ENCODE measurements at regions of chr5 and their contacts with region 1.

Region 1: GRCh38 chr5:173573126-173573960 is 43.1 kb downstream of the BOD1 start:
- DNase-seq: peak; percentile 87
- ATAC-seq: peak; percentile 85
- H3K4me3 Mint-ChIP-seq: peak overlapping the region; percentile 43
- H3K27ac Mint-ChIP-seq: no peak overlapping the region
- H3K4me1 Mint-ChIP-seq: peaks cover 32% of the 10 kb centered on the region
- H3K27me3 Mint-ChIP-seq: peaks cover 2% of the 10 kb centered on the region; the same call in 1 of the 2 replicates
- CTCF ChIP-seq: peak; percentile 98

Region 2: DNA sequence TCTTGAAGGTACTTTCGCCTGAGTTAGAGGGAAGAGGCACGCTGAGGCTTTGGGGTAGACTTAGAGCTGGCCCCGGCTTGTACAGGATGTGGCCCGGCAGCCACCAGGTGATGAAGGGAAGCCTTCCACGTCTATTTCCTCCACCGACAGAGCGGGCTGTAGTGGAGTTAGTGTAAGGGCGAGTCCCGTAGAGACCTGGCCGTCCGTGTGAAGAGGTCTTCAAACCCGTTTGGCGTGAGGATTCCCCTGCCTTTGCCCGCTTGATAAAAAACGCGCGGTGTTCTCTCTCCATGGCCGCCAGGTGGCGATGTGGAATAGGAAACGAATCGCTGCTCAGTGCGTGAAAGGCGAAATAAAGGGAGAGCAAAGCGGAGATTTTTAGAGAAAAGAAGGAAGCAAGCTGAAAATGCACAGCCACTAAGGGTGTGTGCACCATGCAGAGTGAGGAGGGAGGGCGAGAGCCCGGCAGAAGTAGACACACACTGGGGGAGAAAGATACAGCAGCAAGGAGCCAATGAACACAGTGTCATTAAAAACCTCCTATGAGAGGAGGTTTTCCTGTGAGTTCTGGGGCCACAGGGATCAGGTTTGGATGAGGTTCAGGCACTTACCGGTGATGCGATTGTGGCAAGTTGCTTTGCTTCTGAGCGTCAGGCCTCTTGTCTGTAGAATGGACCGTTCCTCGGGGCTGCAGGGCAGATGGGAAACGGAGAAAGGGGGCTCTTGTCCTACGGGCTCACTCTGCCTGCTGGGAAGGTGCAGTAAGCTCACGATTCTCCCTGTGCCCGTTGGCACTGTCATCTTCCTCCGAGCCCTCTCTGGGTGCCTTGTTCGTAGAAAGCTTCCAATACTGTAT is 279.3 kb before region 1 on chr5:
- CTCF ChIA-PET with region 1: interaction called, 16 read pairs
- POLR2A ChIA-PET with region 1: no interaction called
- DNase-seq: peak; percentile 85
- ATAC-seq: peak; percentile 67
- H3K4me3 Mint-ChIP-seq: peak overlapping the region; percentile 63
- H3K27ac Mint-ChIP-seq: no peak overlapping the region
- H3K4me1 Mint-ChIP-seq: peaks cover 56% of the 10 kb centered on the region
- H3K27me3 Mint-ChIP-seq: peaks cover 36% of the 10 kb centered on the region
- CTCF ChIP-seq: peak; percentile 94

Region 3: GRCh38 chr5:173315495-173316350 is 257.6 kb before region 1 on chr5:
- CTCF ChIA-PET with region 1: interaction called, 4 read pairs
- POLR2A ChIA-PET with region 1: interaction called, 10 read pairs
- DNase-seq: no peak
- ATAC-seq: peak; percentile 50
- H3K4me3 Mint-ChIP-seq: no peak overlapping the region
- H3K27ac Mint-ChIP-seq: peak overlapping the region; percentile 91
- H3K4me1 Mint-ChIP-seq: peaks cover 42% of the 10 kb centered on the region
- H3K27me3 Mint-ChIP-seq: peaks cover 16% of the 10 kb centered on the region
- CTCF ChIP-seq: no peak

Region 4: DNA sequence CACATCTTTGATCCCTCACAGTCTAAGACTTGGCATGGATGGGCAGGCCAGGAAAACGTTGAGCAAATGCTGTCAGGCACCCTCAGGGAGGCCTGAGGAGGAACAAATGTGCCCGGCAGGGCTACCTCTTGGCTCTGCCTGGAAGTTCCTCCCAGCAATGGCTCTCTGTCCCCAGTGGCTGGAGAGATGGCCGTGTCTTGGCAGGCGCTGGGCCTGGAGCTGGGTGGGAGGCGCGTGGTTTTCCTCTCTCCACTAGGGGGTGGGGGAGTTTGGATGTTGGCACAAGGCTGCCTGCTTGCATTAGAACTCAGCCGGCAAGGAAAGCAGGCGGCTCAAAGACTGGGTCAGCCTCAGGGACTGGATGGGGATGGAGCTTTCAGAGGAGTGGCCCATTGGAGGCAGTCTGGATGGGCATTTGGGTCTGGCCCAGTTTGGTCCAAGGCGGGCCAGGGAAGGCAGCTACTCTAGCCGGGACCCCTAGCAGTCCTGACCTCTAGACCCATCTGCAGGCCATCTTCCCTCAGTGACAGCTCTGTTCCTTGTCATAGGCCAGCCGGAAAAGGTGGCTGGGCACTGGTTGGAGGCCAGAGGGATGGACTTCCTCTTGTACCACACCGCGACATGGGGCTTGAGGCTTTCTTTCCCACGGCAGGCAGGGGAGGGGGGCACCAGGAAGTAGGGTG is 176.9 kb before region 1 on chr5:
- CTCF ChIA-PET with region 1: interaction called, 50 read pairs
- POLR2A ChIA-PET with region 1: no interaction called
- DNase-seq: peak; percentile 73
- ATAC-seq: peak; percentile 96
- H3K4me3 Mint-ChIP-seq: no peak overlapping the region
- H3K27ac Mint-ChIP-seq: no peak overlapping the region
- H3K4me1 Mint-ChIP-seq: 0 out of 2 replicates have a peak, but pooled peaks cover 3% of the 10 kb centered on the region
- H3K27me3 Mint-ChIP-seq: peaks cover 5% of the 10 kb centered on the region
- CTCF ChIP-seq: no peak; the same call in 1 of the 2 replicates

Region 5: DNA sequence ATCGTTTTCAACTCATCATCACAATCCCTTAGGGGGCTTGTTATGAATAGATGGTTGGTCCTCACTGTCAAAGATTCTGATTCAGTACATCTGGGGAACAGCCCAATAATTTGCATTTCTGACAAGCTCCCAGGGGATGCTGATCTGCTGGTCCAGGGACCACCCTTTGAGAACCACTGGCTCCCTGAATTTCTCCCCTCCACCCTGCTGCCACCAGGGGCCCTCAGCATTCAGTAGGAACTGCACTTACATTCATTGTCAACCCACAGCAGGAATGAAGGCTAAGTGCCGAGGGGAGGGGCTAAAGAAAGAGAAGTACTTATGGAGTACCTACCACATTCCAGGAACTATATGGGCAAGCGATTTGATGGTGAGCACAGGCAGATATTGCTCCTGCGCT is 42.8 kb before region 1 on chr5:
- CTCF ChIA-PET with region 1: interaction called, 13 read pairs
- POLR2A ChIA-PET with region 1: no interaction called
- DNase-seq: peak; percentile 63
- ATAC-seq: peak; percentile 94
- H3K4me3 Mint-ChIP-seq: no peak overlapping the region
- H3K27ac Mint-ChIP-seq: no peak overlapping the region; the same call in 1 of the 2 replicates
- H3K4me1 Mint-ChIP-seq: peaks cover 6% of the 10 kb centered on the region
- H3K27me3 Mint-ChIP-seq: peaks cover 2% of the 10 kb centered on the region; the same call in 1 of the 2 replicates
- CTCF ChIP-seq: peak; percentile 23; the same call in 1 of the 2 replicates

Region 6: GRCh38 chr5:173554038-173554954 is 19.0 kb before region 1 on chr5:
- CTCF ChIA-PET with region 1: interaction called, 16 read pairs
- POLR2A ChIA-PET with region 1: no interaction called
- DNase-seq: no peak
- ATAC-seq: no peak
- H3K4me3 Mint-ChIP-seq: no peak overlapping the region
- H3K27ac Mint-ChIP-seq: no peak overlapping the region
- H3K4me1 Mint-ChIP-seq: peaks cover 19% of the 10 kb centered on the region
- H3K27me3 Mint-ChIP-seq: peaks cover 3% of the 10 kb centered on the region
- CTCF ChIP-seq: no peak

Region 7: DNA sequence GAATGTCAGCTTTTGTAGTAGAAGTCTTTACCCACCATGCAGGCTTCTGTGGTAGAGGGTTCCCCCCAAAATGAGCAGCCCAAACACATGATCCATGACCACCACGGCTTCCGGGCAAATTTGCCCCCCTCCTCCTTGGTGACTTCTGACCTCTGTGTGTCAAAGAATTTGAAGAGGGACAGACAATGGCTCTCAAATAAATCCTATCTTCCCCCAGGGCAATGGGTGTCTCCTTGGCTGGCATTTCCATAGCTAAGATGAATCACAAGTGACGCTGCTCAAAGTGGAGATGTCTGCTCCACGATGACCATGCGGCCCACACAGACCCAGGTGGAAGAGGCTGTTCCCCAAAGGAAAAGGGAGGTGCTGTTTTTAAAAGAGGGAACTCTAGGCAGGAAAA is 73.4 kb after region 1 on chr5:
- CTCF ChIA-PET with region 1: no interaction called
- POLR2A ChIA-PET with region 1: no interaction called
- DNase-seq: no peak
- ATAC-seq: no peak
- H3K4me3 Mint-ChIP-seq: no peak overlapping the region
- H3K27ac Mint-ChIP-seq: no peak overlapping the region
- H3K4me1 Mint-ChIP-seq: peaks cover 40% of the 10 kb centered on the region
- H3K27me3 Mint-ChIP-seq: peaks cover 9% of the 10 kb centered on the region
- CTCF ChIP-seq: no peak

Measured in WTC11 (cell line).